ENCODE measurements at regions of chr22 and their contacts with region 1.

Region 1: DNA sequence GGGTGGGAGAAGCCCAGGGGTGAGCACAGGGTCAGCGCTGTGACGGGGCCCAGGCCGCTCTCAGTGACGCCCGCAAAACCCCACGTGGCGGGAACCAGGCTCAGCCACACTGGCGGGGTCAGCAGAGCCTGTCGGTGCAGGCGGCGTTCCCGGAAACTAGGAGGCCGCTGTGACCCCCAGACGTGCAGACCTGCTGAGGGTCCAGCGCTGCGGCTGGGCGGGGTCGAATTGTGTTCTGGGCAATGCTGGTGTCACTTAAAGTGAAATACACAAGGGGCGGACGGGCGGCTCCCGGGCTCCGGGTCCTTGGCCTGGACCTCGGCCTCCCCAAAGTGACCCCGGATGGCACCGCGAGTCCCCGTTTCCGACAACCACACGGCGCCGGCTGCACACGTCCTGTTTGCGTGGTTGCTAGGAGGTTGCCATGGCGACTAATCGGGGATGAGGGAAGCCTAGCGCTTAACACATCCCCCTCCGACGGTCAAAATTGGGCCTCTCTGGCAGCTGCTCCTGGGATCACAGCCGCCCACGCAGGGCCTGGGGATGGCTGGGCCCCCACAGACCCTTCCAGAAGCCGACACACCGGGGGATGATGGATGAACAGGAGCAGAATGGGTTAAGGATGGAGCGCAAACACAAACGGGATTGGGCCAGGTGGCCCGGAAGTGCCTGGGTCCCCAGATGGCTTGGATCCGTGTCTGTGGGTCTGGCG is 81.7 kb upstream of the PRR5 start:
- DNase-seq: peak; percentile 50
- ATAC-seq: 0 out of 2 replicates have a peak, but pooled peaks have one; percentile 20
- H3K4me3 ChIP-seq: no peak overlapping the region
- H3K27ac ChIP-seq: no peak overlapping the region
- H3K4me1 ChIP-seq: no peaks in the 10 kb centered on the region
- H3K27me3 ChIP-seq: no peaks in the 10 kb centered on the region; the same call in 1 of the 2 replicates
- CTCF ChIP-seq: no peak
- POLR2A ChIP-seq: no peak
- RAD21 ChIP-seq: no peak

Region 2: GRCh38 chr22:44080936-44081861 is 539.1 kb before region 1 on chr22:
- CTCF ChIA-PET with region 1: interaction called, 4 read pairs
- POLR2A ChIA-PET with region 1: no interaction called
- dilution Hi-C with region 1: no loop called
- in situ Hi-C with region 1: loop called (anchors 5 kb)
- intact Hi-C with region 1: no loop called
- DNase-seq: peak; percentile 68
- ATAC-seq: peak; percentile 92
- H3K4me3 ChIP-seq: no peak overlapping the region
- H3K27ac ChIP-seq: no peak overlapping the region
- H3K4me1 ChIP-seq: peaks cover 2% of the 10 kb centered on the region; the same call in 1 of the 2 replicates
- H3K27me3 ChIP-seq: no peaks in the 10 kb centered on the region
- CTCF ChIP-seq: peak; percentile 82
- POLR2A ChIP-seq: no peak
- RAD21 ChIP-seq: peak; percentile 92

Region 3: GRCh38 chr22:44164031-44164430 is 456.3 kb before region 1 on chr22:
- CTCF ChIA-PET with region 1: no interaction called
- POLR2A ChIA-PET with region 1: no interaction called
- dilution Hi-C with region 1: no loop called
- in situ Hi-C with region 1: no loop called
- intact Hi-C with region 1: no loop called
- DNase-seq: no peak
- ATAC-seq: no peak
- H3K4me3 ChIP-seq: no peak overlapping the region
- H3K27ac ChIP-seq: no peak overlapping the region
- H3K4me1 ChIP-seq: no peaks in the 10 kb centered on the region
- H3K27me3 ChIP-seq: no peaks in the 10 kb centered on the region
- CTCF ChIP-seq: no peak
- POLR2A ChIP-seq: no peak
- RAD21 ChIP-seq: no peak

Region 4: GRCh38 chr22:44351685-44352377 is 268.5 kb before region 1 on chr22:
- CTCF ChIA-PET with region 1: no interaction called
- POLR2A ChIA-PET with region 1: no interaction called
- dilution Hi-C with region 1: no loop called
- in situ Hi-C with region 1: no loop called
- intact Hi-C with region 1: loop called (anchors 5 kb)
- DNase-seq: peak; percentile 95
- ATAC-seq: peak; percentile 74
- H3K4me3 ChIP-seq: no peak overlapping the region
- H3K27ac ChIP-seq: no peak overlapping the region
- H3K4me1 ChIP-seq: peaks cover 19% of the 10 kb centered on the region
- H3K27me3 ChIP-seq: peaks cover 2% of the 10 kb centered on the region; the same call in 1 of the 2 replicates
- CTCF ChIP-seq: no peak
- POLR2A ChIP-seq: no peak
- RAD21 ChIP-seq: peak; percentile 24; the same call in 1 of the 2 replicates

Region 5: DNA sequence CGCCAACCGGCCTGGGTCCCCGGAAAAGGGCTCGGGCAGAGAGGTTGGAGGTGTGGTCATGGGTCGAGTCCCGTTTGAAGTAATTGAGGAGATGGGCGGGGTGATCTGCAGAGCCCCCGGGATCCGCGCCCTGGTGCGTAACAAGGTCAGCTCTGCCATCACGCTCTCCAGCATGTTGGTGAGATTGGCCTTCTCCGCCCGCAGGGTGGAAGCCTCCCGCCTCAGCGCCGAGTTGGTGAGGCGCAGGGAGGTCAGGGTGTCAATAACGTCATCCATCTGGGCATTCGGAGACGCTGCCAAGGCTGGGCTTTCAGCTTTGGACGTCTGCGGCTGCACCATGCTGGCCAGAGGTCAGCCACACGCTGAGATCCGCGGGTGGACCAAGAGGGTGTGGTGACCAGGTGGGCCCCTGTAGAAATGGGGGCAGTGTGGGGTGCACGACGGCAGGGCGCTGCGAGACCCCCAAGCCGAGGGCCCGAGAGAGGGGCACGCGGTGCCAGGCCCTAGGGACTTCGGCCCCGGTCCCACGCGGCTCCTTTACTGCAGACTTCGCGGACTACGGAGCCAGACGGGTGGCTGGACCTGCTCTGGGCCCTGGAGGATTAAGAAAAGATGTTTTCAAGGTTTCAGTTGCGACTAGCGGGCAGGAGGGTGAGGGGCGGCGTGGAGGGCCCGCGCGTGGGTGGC is 122.9 kb before region 1 on chr22:
- CTCF ChIA-PET with region 1: no interaction called
- POLR2A ChIA-PET with region 1: no interaction called
- dilution Hi-C with region 1: no loop called
- in situ Hi-C with region 1: no loop called
- intact Hi-C with region 1: loop called (anchors 5 kb)
- DNase-seq: peak; percentile 34
- ATAC-seq: peak; percentile 6
- H3K4me3 ChIP-seq: peak overlapping the region; percentile 85
- H3K27ac ChIP-seq: peak overlapping the region; percentile 76
- H3K4me1 ChIP-seq: peaks cover 19% of the 10 kb centered on the region
- H3K27me3 ChIP-seq: no peaks in the 10 kb centered on the region
- CTCF ChIP-seq: no peak
- POLR2A ChIP-seq: no peak; the same call in 1 of the 2 replicates
- RAD21 ChIP-seq: 0 out of 2 replicates have a peak, but pooled peaks have one; percentile 1